Gastrocnemius medialis (tissue), 4 donors: ENCODE measurements at regions of chr2 and their contacts with region 1.

Region 1: DNA sequence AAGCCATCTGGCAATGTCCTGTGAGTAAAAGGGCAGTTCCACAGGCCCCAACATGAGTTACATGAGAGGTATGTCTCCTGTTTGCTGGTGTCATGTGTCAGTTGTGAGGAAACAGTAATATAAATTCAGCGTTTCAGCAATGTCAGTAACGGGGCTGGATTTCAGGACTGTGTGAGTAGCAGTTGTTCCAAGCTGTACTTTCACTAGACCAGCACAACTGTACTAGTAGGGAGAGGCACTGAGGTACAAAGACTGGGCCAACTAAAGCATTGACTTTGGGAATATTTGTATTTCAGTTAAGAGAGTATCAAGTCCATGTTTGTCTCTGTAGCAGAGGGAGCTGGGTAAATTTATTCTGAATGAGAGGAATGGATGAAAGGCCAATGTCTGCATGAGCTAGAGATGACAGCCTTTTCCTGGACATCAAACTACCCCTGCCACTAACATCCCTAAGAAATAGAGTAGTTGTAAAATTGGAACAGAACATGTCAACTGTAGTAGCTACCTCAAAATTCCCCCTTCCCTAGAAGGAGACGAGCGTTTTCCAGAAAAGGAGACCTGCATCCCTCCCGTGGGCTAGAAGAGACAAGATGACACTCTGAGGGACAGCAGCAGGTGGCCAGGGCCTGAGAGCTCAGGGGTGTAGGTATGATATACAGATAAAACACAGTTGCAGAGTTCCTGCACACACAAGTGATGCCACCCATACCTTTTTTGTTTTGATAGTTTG is 24.4 kb downstream of the EIF4E2 start:
- DNase-seq: peak; percentile 68 to 91
- ATAC-seq: peak; percentile 82 to 86
- H3K4me3 ChIP-seq: peak overlapping the region in 3 of 4 donors; percentile 26 to 49 (median 30)
- H3K27ac ChIP-seq: peak overlapping the region; percentile 85 to 93 (median 88)
- H3K4me1 ChIP-seq: peaks cover 58 to 85% of the 10 kb centered on the region in 2 donors
- H3K27me3 ChIP-seq: no peaks in the 10 kb centered on the region
- CTCF ChIP-seq: no peak
- POLR2A ChIP-seq: peak in 1 of 2 donors; percentile 14

Region 2: GRCh38 chr2:232550354-232551249 is 24.2 kb before region 1 on chr2 and contains the starts of genes EIF4E2 and TIGD1:
- in situ Hi-C with region 1: no loop called
- intact Hi-C with region 1: loop called (anchors 2 kb)
- DNase-seq: peak; percentile 93 to 96
- ATAC-seq: peak; percentile 89 to 92
- H3K4me3 ChIP-seq: peak within 1 kb of the TSS; percentile 70 to 100 (median 92)
- H3K27ac ChIP-seq: peak within 1 kb of the TSS; percentile 95 to 100 (median 99)
- H3K4me1 ChIP-seq: peaks cover 46 to 51% of the 10 kb centered on the region in 2 donors
- H3K27me3 ChIP-seq: no peaks in the 10 kb centered on the region
- CTCF ChIP-seq: peak; percentile 25 to 47 (median 45)
- POLR2A ChIP-seq: peak; percentile 86 to 88
- total RNA-seq, gene EIF4E2: 57.9 to 111 (median 71.2) TPM
- total RNA-seq, gene TIGD1: 1.4 to 3.0 (median 2.1) TPM

Region 3: GRCh38 chr2:232588680-232589585 is 14.1 kb after region 1 on chr2:
- in situ Hi-C with region 1: no loop called
- intact Hi-C with region 1: loop called (anchors 2 kb)
- DNase-seq: peak; percentile 69 to 74
- ATAC-seq: peak; percentile 35 to 42
- H3K4me3 ChIP-seq: no peak overlapping the region
- H3K27ac ChIP-seq: peak overlapping the region; percentile 62 to 82 (median 75)
- H3K4me1 ChIP-seq: peaks cover 27 to 42% of the 10 kb centered on the region in 2 donors
- H3K27me3 ChIP-seq: no peaks in the 10 kb centered on the region
- CTCF ChIP-seq: no peak
- POLR2A ChIP-seq: no peak